Tibial artery (tissue), 4 donors: ENCODE measurements at regions of chr9 and their contacts with region 1.

Region 1: GRCh38 chr9:101201630-101202029 is 173.1 kb downstream of the PLPPR1 start:
- DNase-seq: no peak
- H3K4me3 ChIP-seq: no peak overlapping the region
- H3K27ac ChIP-seq: no peak overlapping the region
- H3K4me1 ChIP-seq: no peaks in the 10 kb centered on the region
- H3K27me3 ChIP-seq: no peaks in the 10 kb centered on the region
- CTCF ChIP-seq: no peak

Region 2: GRCh38 chr9:101126556-101126955 is 75.1 kb before region 1 on chr9:
- intact Hi-C with region 1: no loop called
- DNase-seq: no peak
- H3K4me3 ChIP-seq: no peak overlapping the region
- H3K27ac ChIP-seq: no peak overlapping the region
- H3K4me1 ChIP-seq: no peaks in the 10 kb centered on the region
- H3K27me3 ChIP-seq: no peaks in the 10 kb centered on the region
- CTCF ChIP-seq: no peak

Region 3: DNA sequence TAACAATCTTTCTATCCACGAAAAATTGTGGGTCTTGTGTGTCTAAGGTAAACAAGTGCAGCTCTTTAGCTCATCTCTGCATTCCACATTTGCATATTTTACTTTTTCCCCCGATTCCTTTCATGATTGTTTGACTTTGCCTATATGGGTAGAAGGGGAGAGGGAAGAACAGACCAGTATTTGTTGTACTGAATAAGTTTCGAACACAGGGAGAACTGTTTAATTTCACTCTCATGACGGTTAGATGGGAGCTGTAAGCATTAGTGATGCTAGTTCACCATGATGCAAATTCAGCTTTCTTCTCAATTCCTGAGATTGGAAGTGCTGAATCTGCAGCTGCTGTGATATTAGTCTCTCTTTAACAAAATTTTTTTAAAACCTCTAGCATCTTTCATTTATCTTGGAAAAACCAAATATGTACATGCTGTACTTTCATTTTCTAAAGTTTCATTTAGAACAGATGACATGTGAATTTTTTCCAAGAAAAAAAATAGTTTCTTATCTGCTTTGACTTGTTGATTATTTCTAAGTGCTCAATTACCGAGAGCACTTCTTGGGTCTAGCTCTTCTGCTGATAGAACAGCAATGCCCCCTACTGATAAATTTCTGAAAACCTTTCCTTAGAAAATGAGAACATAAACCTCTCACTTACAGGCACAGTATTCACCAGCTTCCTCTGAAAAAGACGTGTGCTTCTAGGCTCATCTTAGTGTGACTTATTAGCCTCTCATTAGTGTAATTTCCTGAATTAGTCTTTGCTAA is 33.7 kb after region 1 on chr9:
- intact Hi-C with region 1: loop called (anchors 1 kb)
- DNase-seq: no peak
- H3K4me3 ChIP-seq: no peak overlapping the region
- H3K27ac ChIP-seq: no peak overlapping the region
- H3K4me1 ChIP-seq: no peaks in the 10 kb centered on the region
- H3K27me3 ChIP-seq: no peaks in the 10 kb centered on the region
- CTCF ChIP-seq: no peak

Region 4: DNA sequence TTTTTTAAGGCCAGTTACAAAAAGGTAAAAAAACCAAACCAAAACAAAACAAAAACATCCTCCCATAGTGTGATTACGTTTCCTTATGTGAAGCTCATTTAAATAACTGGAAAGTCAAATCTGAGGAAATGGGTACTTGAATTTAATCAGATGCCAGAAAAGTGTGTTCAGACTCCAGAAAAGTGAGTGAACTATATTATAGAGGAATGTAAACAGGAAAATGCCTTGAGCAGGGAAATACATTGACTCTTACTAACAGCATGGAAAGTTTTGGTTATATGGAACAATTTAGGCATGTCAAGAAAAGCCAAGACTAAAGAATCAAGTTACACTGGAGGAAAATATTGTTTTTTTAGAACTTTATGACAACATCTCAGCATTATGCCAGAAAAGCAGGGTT is 294.2 kb after region 1 on chr9:
- intact Hi-C with region 1: no loop called
- DNase-seq: no peak
- H3K4me3 ChIP-seq: no peak overlapping the region
- H3K27ac ChIP-seq: peak overlapping the region in 1 of 2 donors; percentile 32
- H3K4me1 ChIP-seq: peaks cover 0 to 11% (median 1%) of the 10 kb centered on the region in 4 donors
- H3K27me3 ChIP-seq: no peaks in the 10 kb centered on the region
- CTCF ChIP-seq: no peak